ENCODE measurements at regions of chrX and their contacts with region 1.

Region 1: DNA sequence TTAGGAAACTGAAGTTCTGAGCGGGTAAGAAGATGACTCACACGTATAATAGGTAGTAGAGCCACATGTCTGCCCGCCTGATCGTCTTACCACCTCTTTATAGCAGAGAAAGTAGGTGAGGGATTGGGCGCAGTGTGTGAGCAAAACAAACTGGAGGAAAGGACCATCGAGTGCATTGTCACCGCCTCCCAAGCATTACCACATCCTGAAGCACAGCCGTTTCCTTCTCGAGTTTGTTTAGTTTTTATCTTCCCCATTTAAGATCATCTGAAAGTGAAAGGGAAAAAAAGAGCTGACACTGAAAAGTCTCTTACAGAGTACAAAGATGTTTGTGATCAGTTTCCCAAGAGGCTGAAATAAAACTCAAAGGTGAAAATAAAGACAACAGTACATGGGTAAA is 14.8 kb downstream of the PDK3 start:
- DNase-seq: peak; percentile 85
- H3K4me3 Mint-ChIP-seq: peak overlapping the region; percentile 69
- H3K27ac Mint-ChIP-seq: peak overlapping the region; percentile 97
- H3K4me1 Mint-ChIP-seq: peaks cover 63% of the 10 kb centered on the region
- H3K27me3 Mint-ChIP-seq: no peaks in the 10 kb centered on the region

Region 2: DNA sequence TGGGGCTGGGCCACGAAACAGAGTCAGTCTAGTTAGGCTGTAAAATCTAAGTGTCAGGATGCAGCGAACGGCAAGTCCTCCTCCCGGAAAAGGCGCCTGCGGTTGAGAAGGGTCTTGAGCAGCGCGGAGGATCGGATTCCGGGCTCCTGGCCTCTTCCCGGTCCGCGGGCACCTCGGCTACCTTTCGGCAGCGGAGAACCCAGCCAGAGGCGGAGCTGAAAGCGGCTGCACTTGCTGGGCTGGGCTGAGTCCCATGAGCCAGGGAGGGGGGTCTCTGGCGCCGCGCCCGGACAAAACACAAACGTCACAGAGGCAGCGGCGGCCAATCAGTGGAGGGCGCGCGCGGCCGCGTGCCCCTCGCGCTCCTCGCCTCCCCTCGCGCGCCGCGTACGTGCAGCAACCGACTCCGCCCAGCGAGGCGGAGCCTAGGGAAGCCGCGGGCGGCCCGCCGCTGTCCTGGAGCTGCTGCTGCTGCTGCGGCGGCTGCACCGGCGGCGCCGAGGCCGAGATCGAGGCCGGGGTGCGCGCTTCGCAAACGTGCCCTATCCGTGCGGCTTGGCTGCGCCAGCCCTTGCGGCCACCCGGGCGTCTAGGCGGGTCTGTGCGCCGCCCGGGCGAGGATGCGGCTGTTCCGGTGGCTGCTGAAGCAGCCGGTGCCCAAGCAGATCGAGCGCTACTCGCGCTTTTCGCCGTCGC is 14.9 kb before region 1 on chrX and contains the start of gene PDK3:
- CTCF ChIA-PET with region 1: no interaction called
- POLR2A ChIA-PET with region 1: interaction called, 27 read pairs
- intact Hi-C with region 1: loop called (anchors 1 kb)
- DNase-seq: peak; percentile 89
- H3K4me3 Mint-ChIP-seq: peak within 1 kb of the TSS; percentile 75
- H3K27ac Mint-ChIP-seq: peak within 1 kb of the TSS; percentile 85
- H3K4me1 Mint-ChIP-seq: peaks cover 35% of the 10 kb centered on the region
- H3K27me3 Mint-ChIP-seq: no peaks in the 10 kb centered on the region
- total RNA-seq, gene PDK3: 39.8 to 41.3 TPM

Region 3: GRCh38 chrX:24498975-24499374 is 19.1 kb after region 1 on chrX:
- CTCF ChIA-PET with region 1: interaction called, 20 read pairs
- POLR2A ChIA-PET with region 1: no interaction called
- intact Hi-C with region 1: loop called (anchors 2 kb)
- DNase-seq: no peak
- H3K4me3 Mint-ChIP-seq: no peak overlapping the region
- H3K27ac Mint-ChIP-seq: no peak overlapping the region
- H3K4me1 Mint-ChIP-seq: peaks cover 24% of the 10 kb centered on the region
- H3K27me3 Mint-ChIP-seq: no peaks in the 10 kb centered on the region

Region 4: GRCh38 chrX:24506055-24506454 is 26.1 kb after region 1 on chrX:
- CTCF ChIA-PET with region 1: no interaction called
- POLR2A ChIA-PET with region 1: no interaction called
- intact Hi-C with region 1: loop called (anchors 1 kb)
- DNase-seq: peak; percentile 58
- H3K4me3 Mint-ChIP-seq: no peak overlapping the region
- H3K27ac Mint-ChIP-seq: peak overlapping the region; percentile 47
- H3K4me1 Mint-ChIP-seq: peaks cover 26% of the 10 kb centered on the region
- H3K27me3 Mint-ChIP-seq: no peaks in the 10 kb centered on the region

Region 5: DNA sequence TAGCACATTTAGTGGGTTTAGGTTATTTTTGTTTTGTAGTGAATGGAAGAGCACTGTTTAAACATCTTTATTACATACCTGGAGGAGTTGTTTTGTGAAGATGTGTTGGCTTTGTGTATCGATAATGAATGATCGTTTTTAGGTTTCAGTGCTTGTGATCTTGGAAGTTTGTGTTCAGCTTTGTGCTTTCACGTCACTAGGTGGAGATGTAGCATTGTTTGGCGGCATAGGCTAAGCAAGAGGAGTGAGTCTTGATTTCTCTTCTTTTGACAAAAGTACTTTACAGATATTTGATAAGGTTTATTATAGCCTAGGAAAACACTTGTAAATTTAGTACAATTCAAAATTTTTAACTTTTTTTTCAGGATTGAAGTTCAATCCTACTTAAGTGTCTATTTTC is 35.5 kb after region 1 on chrX:
- CTCF ChIA-PET with region 1: no interaction called
- POLR2A ChIA-PET with region 1: no interaction called
- intact Hi-C with region 1: loop called (anchors 1 kb)
- DNase-seq: no peak
- H3K4me3 Mint-ChIP-seq: no peak overlapping the region
- H3K27ac Mint-ChIP-seq: no peak overlapping the region
- H3K4me1 Mint-ChIP-seq: peaks cover 23% of the 10 kb centered on the region
- H3K27me3 Mint-ChIP-seq: no peaks in the 10 kb centered on the region

Region 6: DNA sequence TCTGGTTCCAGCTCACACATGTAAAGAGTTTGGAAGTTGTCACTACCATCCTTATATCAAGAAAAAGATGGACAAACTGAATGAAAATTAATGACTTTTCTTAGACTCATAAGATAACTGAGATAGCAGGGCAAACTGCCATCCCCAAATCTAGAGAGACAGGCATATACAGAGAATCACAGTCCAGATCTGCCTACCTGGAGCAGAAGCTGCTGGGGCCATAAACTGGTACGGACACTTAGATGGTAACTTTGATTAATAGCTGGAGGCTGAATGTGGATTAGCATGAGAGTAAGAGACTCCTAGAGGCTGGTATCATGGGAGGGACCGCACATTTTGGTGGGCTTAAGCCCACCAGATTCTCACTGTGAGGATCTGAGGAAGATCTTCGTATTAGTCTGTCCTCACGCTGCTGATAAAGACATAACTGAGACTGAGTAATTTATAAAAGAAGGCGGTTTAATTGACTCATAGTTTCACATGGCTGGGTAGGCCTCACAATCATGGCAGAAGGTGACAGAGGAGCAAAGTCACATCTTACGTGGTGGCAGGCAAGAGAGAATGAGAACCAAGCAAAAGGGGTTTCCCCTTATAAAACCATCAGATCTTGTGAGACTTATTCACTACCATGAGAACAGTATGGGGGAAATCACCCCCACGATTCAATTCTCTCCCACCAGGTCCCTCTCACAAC is 203.0 kb after region 1 on chrX:
- CTCF ChIA-PET with region 1: no interaction called
- POLR2A ChIA-PET with region 1: no interaction called
- intact Hi-C with region 1: loop called (anchors 1 kb)
- DNase-seq: peak; percentile 58
- H3K4me3 Mint-ChIP-seq: no peak overlapping the region
- H3K27ac Mint-ChIP-seq: peak overlapping the region; percentile 58
- H3K4me1 Mint-ChIP-seq: peaks cover 16% of the 10 kb centered on the region
- H3K27me3 Mint-ChIP-seq: peaks cover 2% of the 10 kb centered on the region

Measured in activated CD4-positive, alpha-beta memory T cell treated with anti-CD3 and anti-CD28 coated beads for 36 hours (primary cell).